ENCODE measurements at regions of chr1 and their contacts with region 1.

Region 1: DNA sequence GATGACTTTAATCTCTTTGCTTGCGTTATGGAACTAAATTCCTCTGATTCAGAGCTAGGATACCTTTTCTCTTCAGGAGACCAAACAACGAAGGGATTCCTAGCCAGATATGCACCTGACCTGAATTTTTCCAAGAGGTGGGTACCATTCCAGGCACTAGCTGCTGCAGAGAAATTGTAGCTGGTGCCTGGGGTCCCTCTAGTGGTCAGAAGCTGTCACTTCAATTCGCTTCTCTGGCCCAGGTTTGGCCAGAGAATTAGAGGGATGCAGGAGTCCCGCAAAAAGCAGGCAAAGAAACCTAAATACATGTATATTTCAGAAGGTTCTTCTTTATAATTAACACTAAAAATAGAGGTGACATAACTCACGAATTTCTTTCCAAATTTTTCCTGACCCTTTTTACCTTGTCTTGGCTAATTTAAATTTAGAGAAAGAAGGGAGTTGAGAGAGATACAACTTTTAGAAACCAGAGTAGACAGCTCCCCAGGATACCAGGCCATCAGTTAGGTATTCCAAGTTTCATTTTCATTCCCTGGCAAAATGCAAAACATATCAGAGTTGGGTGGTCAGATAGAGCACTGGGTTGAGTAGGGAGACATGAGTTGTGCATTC is 9.6 kb downstream of the ACKR1 start:
- DNase-seq: peak; percentile 47
- H3K4me3 Mint-ChIP-seq: no peak overlapping the region
- H3K27ac Mint-ChIP-seq: no peak overlapping the region
- H3K4me1 Mint-ChIP-seq: no peaks in the 10 kb centered on the region
- H3K27me3 Mint-ChIP-seq: peaks cover 27% of the 10 kb centered on the region

Region 2: DNA sequence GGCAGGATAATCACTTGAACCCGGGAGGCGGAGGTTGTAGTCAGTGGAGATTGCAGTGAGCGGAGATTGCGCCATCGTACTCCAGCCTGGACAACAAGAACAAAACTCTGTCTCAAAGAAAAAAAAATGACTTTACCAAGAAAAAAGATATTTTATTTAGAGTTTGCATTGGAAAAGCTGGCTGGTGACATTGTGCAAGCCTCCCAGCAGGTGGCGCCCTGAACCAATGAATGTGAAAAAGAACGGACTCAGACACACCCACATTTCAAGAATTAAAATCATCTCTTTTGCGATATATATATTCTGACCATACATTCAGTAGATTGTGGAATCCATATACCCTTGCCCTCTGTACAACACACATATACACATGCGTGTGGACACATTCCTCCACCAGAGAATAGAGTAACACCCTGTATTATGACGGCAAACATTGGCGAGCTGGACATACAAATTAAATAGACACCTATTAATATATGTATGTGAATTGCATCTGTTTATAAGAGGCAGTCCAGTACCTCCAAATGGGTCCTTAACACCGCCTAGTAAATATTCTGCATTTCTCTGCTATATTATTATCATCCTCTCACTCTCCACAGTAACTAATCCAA is 81.9 kb before region 1 on chr1:
- CTCF ChIA-PET with region 1: interaction called, 81 read pairs
- DNase-seq: peak; percentile 74
- H3K4me3 Mint-ChIP-seq: no peak overlapping the region
- H3K27ac Mint-ChIP-seq: no peak overlapping the region
- H3K4me1 Mint-ChIP-seq: no peaks in the 10 kb centered on the region
- H3K27me3 Mint-ChIP-seq: peaks cover 4% of the 10 kb centered on the region

Region 3: GRCh38 chr1:159161001-159161718 is 53.1 kb before region 1 on chr1:
- CTCF ChIA-PET with region 1: interaction called, 22 read pairs
- DNase-seq: peak; percentile 69
- H3K4me3 Mint-ChIP-seq: no peak overlapping the region
- H3K27ac Mint-ChIP-seq: no peak overlapping the region
- H3K4me1 Mint-ChIP-seq: no peaks in the 10 kb centered on the region
- H3K27me3 Mint-ChIP-seq: peaks cover 8% of the 10 kb centered on the region

Region 4: DNA sequence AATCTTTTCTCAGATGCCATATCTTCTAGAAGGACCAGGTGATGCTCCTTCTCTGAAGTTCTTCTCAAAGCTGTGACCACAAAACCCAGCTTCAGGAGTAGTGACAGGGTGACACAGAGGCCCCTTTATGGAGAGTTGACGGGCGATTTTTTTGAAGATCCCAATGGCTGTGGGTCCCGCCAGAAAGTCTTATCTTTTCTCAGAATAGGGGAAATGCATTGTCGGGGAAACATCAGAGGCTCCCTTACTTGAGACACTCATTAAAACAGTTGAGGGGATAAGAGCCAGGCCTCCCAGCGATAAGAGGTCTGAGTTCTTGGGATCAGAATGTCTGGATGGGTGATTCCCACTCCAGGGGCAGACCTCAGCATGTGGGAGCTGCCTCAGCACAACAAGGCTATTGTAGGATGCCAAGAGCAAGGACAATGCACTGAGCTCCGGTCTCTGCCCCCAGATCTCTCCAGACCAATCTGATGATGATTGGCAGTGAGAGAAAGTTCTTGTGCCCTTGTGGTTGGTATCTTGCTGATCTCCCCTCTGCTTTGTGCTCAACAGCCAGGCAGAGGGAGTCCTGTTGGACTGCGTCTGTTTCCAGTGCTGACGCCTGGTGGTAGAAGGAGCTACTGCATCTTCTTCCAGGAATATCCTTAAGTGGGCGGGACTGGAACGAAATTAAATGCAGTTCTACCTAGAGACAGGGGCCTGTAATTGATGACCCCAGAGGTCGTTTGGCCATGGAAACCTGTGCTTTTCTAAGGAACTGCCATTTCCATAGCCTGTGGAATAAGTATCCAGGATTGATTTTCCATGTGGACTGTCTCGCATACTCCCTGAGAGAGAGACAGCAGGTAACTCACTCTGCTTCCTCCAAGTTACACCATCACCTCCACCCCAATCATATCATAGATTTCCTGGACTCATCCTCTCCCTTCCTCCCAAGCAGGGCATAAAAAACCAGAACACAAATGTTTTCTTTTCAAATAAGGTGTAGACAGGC is 16.4 kb before region 1 on chr1:
- CTCF ChIA-PET with region 1: interaction called, 24 read pairs
- DNase-seq: peak; percentile 62
- H3K4me3 Mint-ChIP-seq: no peak overlapping the region
- H3K27ac Mint-ChIP-seq: no peak overlapping the region
- H3K4me1 Mint-ChIP-seq: peaks cover 2% of the 10 kb centered on the region
- H3K27me3 Mint-ChIP-seq: peaks cover 53% of the 10 kb centered on the region

Region 5: DNA sequence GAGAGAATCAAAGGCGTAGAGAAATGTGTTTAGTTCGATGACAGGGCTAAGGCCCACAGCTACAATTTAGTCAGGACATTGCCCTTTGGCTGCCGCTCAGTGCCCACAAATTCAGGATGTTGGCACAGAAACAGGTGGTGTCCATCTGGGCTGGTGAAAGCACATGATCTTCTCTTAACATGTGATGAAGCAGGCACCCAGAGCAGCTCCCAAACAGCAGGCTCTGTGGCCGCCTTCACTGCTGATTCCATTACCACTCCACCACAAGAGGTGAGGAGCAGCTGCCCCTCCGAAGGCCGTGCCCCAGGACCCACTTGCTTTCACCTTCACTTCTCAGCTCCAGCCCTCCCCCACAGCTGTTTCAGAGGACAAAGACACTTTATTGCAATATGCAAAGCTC is 15.2 kb after region 1 on chr1:
- CTCF ChIA-PET with region 1: interaction called, 17 read pairs
- DNase-seq: no peak
- H3K4me3 Mint-ChIP-seq: no peak overlapping the region
- H3K27ac Mint-ChIP-seq: no peak overlapping the region
- H3K4me1 Mint-ChIP-seq: no peaks in the 10 kb centered on the region
- H3K27me3 Mint-ChIP-seq: peaks cover 7% of the 10 kb centered on the region

Region 6: DNA sequence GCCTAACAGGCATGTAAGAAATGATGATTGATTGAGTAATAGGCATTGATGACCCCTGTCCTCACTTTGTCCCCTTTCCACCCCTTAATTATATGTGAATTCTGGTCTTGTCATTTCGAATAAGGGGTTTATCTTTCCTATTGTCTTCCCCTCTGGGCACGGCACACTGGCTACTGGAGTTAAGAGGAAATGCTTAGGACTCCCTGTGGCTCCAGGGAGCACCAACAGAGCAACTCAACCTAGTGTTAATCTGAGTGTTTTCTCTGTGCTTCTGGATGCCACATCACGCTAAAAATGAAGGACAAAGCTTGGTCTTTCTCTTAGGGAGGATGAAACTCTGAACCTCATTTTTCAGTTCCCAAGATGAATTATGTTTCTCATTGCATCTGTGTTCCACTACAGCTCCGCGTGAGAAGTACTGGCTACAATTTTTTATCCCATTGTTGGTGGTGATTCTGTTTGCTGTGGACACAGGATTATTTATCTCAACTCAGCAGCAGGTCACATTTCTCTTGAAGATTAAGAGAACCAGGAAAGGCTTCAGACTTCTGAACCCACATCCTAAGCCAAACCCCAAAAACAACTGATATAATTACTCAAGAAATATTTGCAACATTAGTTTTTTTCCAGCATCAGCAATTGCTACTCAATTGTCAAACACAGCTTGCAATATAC is 93.2 kb after region 1 on chr1:
- CTCF ChIA-PET with region 1: no interaction called
- DNase-seq: no peak
- H3K4me3 Mint-ChIP-seq: no peak overlapping the region
- H3K27ac Mint-ChIP-seq: no peak overlapping the region
- H3K4me1 Mint-ChIP-seq: no peaks in the 10 kb centered on the region
- H3K27me3 Mint-ChIP-seq: peaks cover 3% of the 10 kb centered on the region